ENCODE measurements at regions of chr14 and their contacts with region 1.

Region 1: GRCh38 chr14:21476925-21477681 is at the starts of genes RAB2B and TOX4:
- DNase-seq: peak; percentile 97 to 98
- ATAC-seq: peak; percentile 98 to 99
- H3K4me3 ChIP-seq: peak within 1 kb of the TSS; percentile 66 to 90 (median 80)
- H3K27ac ChIP-seq: peak within 1 kb of the TSS; percentile 83 to 89 (median 87)
- H3K4me1 ChIP-seq: peaks cover 19 to 20% of the 10 kb centered on the region in 2 donors
- H3K27me3 ChIP-seq: no peaks in the 10 kb centered on the region
- CTCF ChIP-seq: peak; percentile 90 to 100 (median 99)
- POLR2A ChIP-seq: peak; percentile 68 to 87
- total RNA-seq, gene RAB2B: 4.8 to 13.6 (median 8.0) TPM
- total RNA-seq, gene TOX4: 57.2 to 135 (median 112) TPM

Region 2: DNA sequence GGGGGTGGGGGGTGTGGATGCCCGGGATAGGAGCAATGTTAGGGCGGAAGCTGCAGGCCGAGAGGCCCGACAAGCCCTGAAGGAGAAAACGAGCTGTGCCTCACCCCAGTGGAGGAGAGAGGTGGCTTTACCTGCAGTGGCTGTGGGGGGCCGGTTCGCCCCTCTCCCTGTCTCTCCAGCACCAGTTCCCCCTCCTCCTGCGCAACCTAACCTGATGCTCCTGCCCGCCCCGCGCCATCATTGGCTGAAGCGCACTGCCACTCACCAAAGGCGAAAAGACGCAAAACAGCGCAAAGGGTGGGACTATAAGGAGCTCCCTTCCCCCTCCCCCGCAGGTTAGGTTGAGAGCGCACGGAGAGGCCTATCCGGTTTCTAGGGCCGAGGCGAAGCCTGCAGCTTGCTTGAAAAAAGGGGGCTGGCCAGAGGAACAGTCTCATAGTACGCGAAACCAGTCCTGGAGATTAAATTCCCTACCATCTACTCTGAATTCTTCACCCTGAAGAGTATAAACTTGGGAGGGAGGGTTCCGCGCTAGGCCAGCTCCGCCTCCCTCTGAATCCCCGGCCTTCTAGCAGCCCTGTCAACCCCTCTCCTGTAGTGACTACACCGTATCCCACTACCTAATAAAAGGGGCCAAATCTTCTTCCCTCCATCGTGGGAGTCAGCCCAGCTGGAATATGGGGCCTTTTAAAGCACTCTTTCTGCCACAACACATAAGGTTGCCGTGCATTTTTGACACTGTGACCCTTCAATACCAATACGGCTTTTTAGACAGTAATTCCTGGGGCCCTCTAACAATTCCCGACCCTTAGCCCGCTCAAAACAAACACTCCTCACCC is 39.8 kb before region 1 on chr14:
- in situ Hi-C with region 1: no loop called
- intact Hi-C with region 1: loop called (anchors 1 kb)
- DNase-seq: peak; percentile 97 to 99
- ATAC-seq: peak; percentile 99 to 100
- H3K4me3 ChIP-seq: peak overlapping the region; percentile 76 to 99 (median 92)
- H3K27ac ChIP-seq: peak overlapping the region; percentile 81 to 88 (median 86)
- H3K4me1 ChIP-seq: peaks cover 23 to 25% of the 10 kb centered on the region in 2 donors
- H3K27me3 ChIP-seq: no peaks in the 10 kb centered on the region
- CTCF ChIP-seq: no peak
- POLR2A ChIP-seq: peak; percentile 30 to 41

Region 3: GRCh38 chr14:21498553-21499526 is 21.7 kb after region 1 on chr14:
- in situ Hi-C with region 1: no loop called
- intact Hi-C with region 1: no loop called
- DNase-seq: no peak
- ATAC-seq: no peak
- H3K4me3 ChIP-seq: no peak overlapping the region
- H3K27ac ChIP-seq: peak overlapping the region in 1 of 4 donors; percentile 21
- H3K4me1 ChIP-seq: no peaks in the 10 kb centered on the region
- H3K27me3 ChIP-seq: no peaks in the 10 kb centered on the region
- CTCF ChIP-seq: peak; percentile 12 to 41 (median 27)
- POLR2A ChIP-seq: no peak

Region 4: GRCh38 chr14:21510735-21511657 is 33.9 kb after region 1 on chr14 and contains the start of gene METTL3:
- in situ Hi-C with region 1: no loop called
- intact Hi-C with region 1: loop called (anchors 1 kb)
- DNase-seq: peak; percentile 98 to 99
- ATAC-seq: peak; percentile 99 to 100
- H3K4me3 ChIP-seq: peak within 1 kb of the TSS; percentile 73 to 96 (median 87)
- H3K27ac ChIP-seq: peak within 1 kb of the TSS; percentile 89 to 96 (median 91)
- H3K4me1 ChIP-seq: peaks cover 16 to 17% of the 10 kb centered on the region in 2 donors
- H3K27me3 ChIP-seq: no peaks in the 10 kb centered on the region
- CTCF ChIP-seq: no peak
- POLR2A ChIP-seq: peak; percentile 52 to 63
- total RNA-seq, gene METTL3: 16.5 to 52.4 (median 34.6) TPM

Region 5: GRCh38 chr14:21680072-21680471 is 203.0 kb after region 1 on chr14:
- in situ Hi-C with region 1: no loop called
- intact Hi-C with region 1: no loop called
- DNase-seq: no peak
- ATAC-seq: no peak
- H3K4me3 ChIP-seq: no peak overlapping the region
- H3K27ac ChIP-seq: no peak overlapping the region
- H3K4me1 ChIP-seq: no peaks in the 10 kb centered on the region
- H3K27me3 ChIP-seq: no peaks in the 10 kb centered on the region
- CTCF ChIP-seq: no peak
- POLR2A ChIP-seq: no peak

Measured in gastrocnemius medialis (tissue), 4 donors.